Caco-2 (cell line): ENCODE measurements at regions of chr14 and their contacts with region 1.

Region 1: GRCh38 chr14:34365309-34365915 is 96.6 kb downstream of the SPTSSA start:
- DNase-seq: no peak
- H3K4me3 ChIP-seq: no peak overlapping the region
- H3K4me3 Mint-ChIP-seq: peak overlapping the region; percentile 54
- H3K27ac Mint-ChIP-seq: no peak overlapping the region
- H3K4me1 ChIP-seq: peaks cover 15% of the 10 kb centered on the region; the same call in 1 of the 2 replicates
- H3K4me1 Mint-ChIP-seq: peaks cover 8% of the 10 kb centered on the region
- H3K27me3 ChIP-seq: no peaks in the 10 kb centered on the region
- H3K27me3 Mint-ChIP-seq: no peaks in the 10 kb centered on the region
- CTCF ChIP-seq: peak in 1 of 2 experiments; percentile 46

Region 2: GRCh38 chr14:34030864-34031263 is 334.5 kb before region 1 on chr14:
- CTCF ChIA-PET with region 1: no interaction called
- POLR2A ChIA-PET with region 1: no interaction called
- intact Hi-C with region 1: no loop called
- DNase-seq: no peak
- H3K4me3 ChIP-seq: no peak overlapping the region
- H3K4me3 Mint-ChIP-seq: no peak overlapping the region
- H3K27ac Mint-ChIP-seq: no peak overlapping the region
- H3K4me1 ChIP-seq: peaks cover 6% of the 10 kb centered on the region; the same call in 1 of the 2 replicates
- H3K4me1 Mint-ChIP-seq: no peaks in the 10 kb centered on the region
- H3K27me3 ChIP-seq: no peaks in the 10 kb centered on the region
- H3K27me3 Mint-ChIP-seq: no peaks in the 10 kb centered on the region
- CTCF ChIP-seq: no peak

Region 3: GRCh38 chr14:34180460-34180868 is 184.9 kb before region 1 on chr14:
- CTCF ChIA-PET with region 1: no interaction called
- POLR2A ChIA-PET with region 1: no interaction called
- intact Hi-C with region 1: no loop called
- DNase-seq: no peak
- H3K4me3 ChIP-seq: no peak overlapping the region
- H3K4me3 Mint-ChIP-seq: no peak overlapping the region
- H3K27ac Mint-ChIP-seq: no peak overlapping the region
- H3K4me1 ChIP-seq: peaks cover 12% of the 10 kb centered on the region; the same call in 1 of the 2 replicates
- H3K4me1 Mint-ChIP-seq: no peaks in the 10 kb centered on the region
- H3K27me3 ChIP-seq: no peaks in the 10 kb centered on the region
- H3K27me3 Mint-ChIP-seq: no peaks in the 10 kb centered on the region
- CTCF ChIP-seq: no peak

Region 4: DNA sequence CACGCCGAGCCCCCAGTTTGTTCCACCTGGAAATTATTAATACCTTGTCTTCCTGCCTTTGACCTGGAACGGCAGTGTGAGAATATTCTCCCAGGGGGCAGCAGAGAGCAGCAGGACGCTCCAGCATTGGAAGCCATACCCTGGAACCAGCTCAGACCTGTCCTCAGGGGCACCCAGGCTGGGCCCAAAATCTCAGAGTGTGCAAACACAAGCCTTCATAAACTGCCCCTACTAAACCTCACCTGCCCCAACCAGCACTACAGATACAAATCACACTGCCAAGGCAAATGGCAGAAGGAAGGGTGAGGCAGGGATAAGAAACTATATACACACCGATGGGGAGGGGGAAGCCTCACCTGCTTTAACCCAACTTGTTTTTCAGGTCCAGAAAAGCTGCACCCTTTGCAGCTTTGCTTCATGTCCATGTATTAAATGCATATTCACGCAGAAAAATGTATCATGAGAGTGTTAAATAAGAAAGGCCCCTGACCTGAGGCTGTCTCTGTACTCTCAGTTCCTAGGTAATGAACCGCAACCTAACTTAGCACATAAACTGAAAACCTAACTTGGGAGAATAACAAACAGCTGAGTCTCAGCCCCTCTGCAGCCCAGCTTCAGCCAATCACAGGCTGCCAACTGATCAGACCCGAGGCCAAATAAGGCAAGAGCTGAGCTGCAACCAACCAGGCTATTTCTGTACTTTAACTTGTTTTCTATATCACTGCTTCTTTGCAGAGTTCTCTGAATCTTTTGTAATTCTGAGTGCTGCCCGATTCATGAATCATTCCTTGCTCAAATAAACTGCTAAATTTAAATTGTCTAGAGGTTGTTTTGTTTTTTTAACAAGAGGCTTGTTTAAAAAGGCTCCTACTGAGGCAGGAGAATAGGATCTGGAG is 33.4 kb before region 1 on chr14:
- CTCF ChIA-PET with region 1: interaction called, 4 read pairs
- POLR2A ChIA-PET with region 1: no interaction called
- intact Hi-C with region 1: loop called (anchors 5 kb)
- DNase-seq: peak; percentile 73 to 77
- H3K4me3 ChIP-seq: no peak overlapping the region
- H3K4me3 Mint-ChIP-seq: no peak overlapping the region
- H3K27ac Mint-ChIP-seq: no peak overlapping the region
- H3K4me1 ChIP-seq: peaks cover 28% of the 10 kb centered on the region
- H3K4me1 Mint-ChIP-seq: peaks cover 16% of the 10 kb centered on the region
- H3K27me3 ChIP-seq: no peaks in the 10 kb centered on the region
- H3K27me3 Mint-ChIP-seq: no peaks in the 10 kb centered on the region
- CTCF ChIP-seq: peak; percentile 61 to 65

Region 5: GRCh38 chr14:34347683-34348082 is 17.7 kb before region 1 on chr14:
- CTCF ChIA-PET with region 1: no interaction called
- POLR2A ChIA-PET with region 1: no interaction called
- intact Hi-C with region 1: no loop called
- DNase-seq: no peak
- H3K4me3 ChIP-seq: no peak overlapping the region
- H3K4me3 Mint-ChIP-seq: no peak overlapping the region
- H3K27ac Mint-ChIP-seq: no peak overlapping the region
- H3K4me1 ChIP-seq: no peaks in the 10 kb centered on the region; the same call in 1 of the 2 replicates
- H3K4me1 Mint-ChIP-seq: no peaks in the 10 kb centered on the region
- H3K27me3 ChIP-seq: no peaks in the 10 kb centered on the region
- H3K27me3 Mint-ChIP-seq: no peaks in the 10 kb centered on the region
- CTCF ChIP-seq: no peak

Region 6: GRCh38 chr14:34425095-34425851 is 59.9 kb after region 1 on chr14:
- CTCF ChIA-PET with region 1: no interaction called
- POLR2A ChIA-PET with region 1: no interaction called
- intact Hi-C with region 1: no loop called
- DNase-seq: peak; percentile 46 to 66
- H3K4me3 ChIP-seq: no peak overlapping the region
- H3K4me3 Mint-ChIP-seq: no peak overlapping the region
- H3K27ac Mint-ChIP-seq: peak overlapping the region; percentile 23
- H3K4me1 ChIP-seq: peaks cover 14% of the 10 kb centered on the region
- H3K4me1 Mint-ChIP-seq: peaks cover 21% of the 10 kb centered on the region
- H3K27me3 ChIP-seq: no peaks in the 10 kb centered on the region
- H3K27me3 Mint-ChIP-seq: no peaks in the 10 kb centered on the region
- CTCF ChIP-seq: no peak

Region 7: GRCh38 chr14:34436118-34436880 is 70.9 kb after region 1 on chr14:
- CTCF ChIA-PET with region 1: no interaction called
- POLR2A ChIA-PET with region 1: no interaction called
- intact Hi-C with region 1: loop called (anchors 1 kb)
- DNase-seq: peak in 1 of 2 experiments; percentile 35
- H3K4me3 ChIP-seq: no peak overlapping the region
- H3K4me3 Mint-ChIP-seq: no peak overlapping the region
- H3K27ac Mint-ChIP-seq: peak overlapping the region; percentile 10
- H3K4me1 ChIP-seq: peaks cover 28% of the 10 kb centered on the region
- H3K4me1 Mint-ChIP-seq: peaks cover 23% of the 10 kb centered on the region
- H3K27me3 ChIP-seq: no peaks in the 10 kb centered on the region
- H3K27me3 Mint-ChIP-seq: no peaks in the 10 kb centered on the region
- CTCF ChIP-seq: no peak

Region 8: GRCh38 chr14:34461334-34462131 is 96.1 kb after region 1 on chr14:
- CTCF ChIA-PET with region 1: no interaction called
- POLR2A ChIA-PET with region 1: no interaction called
- intact Hi-C with region 1: loop called (anchors 1 kb)
- DNase-seq: peak; percentile 66 to 78
- H3K4me3 ChIP-seq: peak overlapping the region; percentile 45
- H3K4me3 Mint-ChIP-seq: peak overlapping the region; percentile 73
- H3K27ac Mint-ChIP-seq: peak overlapping the region; percentile 51
- H3K4me1 ChIP-seq: peaks cover 11% of the 10 kb centered on the region
- H3K4me1 Mint-ChIP-seq: no peaks in the 10 kb centered on the region
- H3K27me3 ChIP-seq: no peaks in the 10 kb centered on the region
- H3K27me3 Mint-ChIP-seq: no peaks in the 10 kb centered on the region
- CTCF ChIP-seq: no peak

Region 9: GRCh38 chr14:34496679-34497513 is 131.5 kb after region 1 on chr14:
- CTCF ChIA-PET with region 1: no interaction called
- POLR2A ChIA-PET with region 1: no interaction called
- intact Hi-C with region 1: loop called (anchors 1 kb)
- DNase-seq: peak; percentile 72 to 81
- H3K4me3 ChIP-seq: no peak overlapping the region
- H3K4me3 Mint-ChIP-seq: peak overlapping the region; percentile 61
- H3K27ac Mint-ChIP-seq: peak overlapping the region; percentile 91
- H3K4me1 ChIP-seq: peaks cover 23% of the 10 kb centered on the region
- H3K4me1 Mint-ChIP-seq: no peaks in the 10 kb centered on the region
- H3K27me3 ChIP-seq: no peaks in the 10 kb centered on the region
- H3K27me3 Mint-ChIP-seq: no peaks in the 10 kb centered on the region
- CTCF ChIP-seq: peak; percentile 23 to 46

Region 10: GRCh38 chr14:34539407-34540180 is 174.2 kb after region 1 on chr14 and contains the start of gene EAPP:
- CTCF ChIA-PET with region 1: no interaction called
- POLR2A ChIA-PET with region 1: no interaction called
- intact Hi-C with region 1: loop called (anchors 10 kb)
- DNase-seq: peak; percentile 97 to 99
- H3K4me3 ChIP-seq: peak within 1 kb of the TSS; percentile 68
- H3K4me3 Mint-ChIP-seq: peak within 1 kb of the TSS; percentile 98
- H3K27ac Mint-ChIP-seq: peak within 1 kb of the TSS; percentile 92
- H3K4me1 ChIP-seq: peaks cover 24% of the 10 kb centered on the region
- H3K4me1 Mint-ChIP-seq: peaks cover 6% of the 10 kb centered on the region
- H3K27me3 ChIP-seq: no peaks in the 10 kb centered on the region
- H3K27me3 Mint-ChIP-seq: no peaks in the 10 kb centered on the region
- CTCF ChIP-seq: no peak
- total RNA-seq, gene EAPP: 26.8 and 30.7 TPM in 2 replicates